Left cardiac atrium (tissue), 4 donors: ENCODE measurements at regions of chr12 and their contacts with region 1.

Region 1: DNA sequence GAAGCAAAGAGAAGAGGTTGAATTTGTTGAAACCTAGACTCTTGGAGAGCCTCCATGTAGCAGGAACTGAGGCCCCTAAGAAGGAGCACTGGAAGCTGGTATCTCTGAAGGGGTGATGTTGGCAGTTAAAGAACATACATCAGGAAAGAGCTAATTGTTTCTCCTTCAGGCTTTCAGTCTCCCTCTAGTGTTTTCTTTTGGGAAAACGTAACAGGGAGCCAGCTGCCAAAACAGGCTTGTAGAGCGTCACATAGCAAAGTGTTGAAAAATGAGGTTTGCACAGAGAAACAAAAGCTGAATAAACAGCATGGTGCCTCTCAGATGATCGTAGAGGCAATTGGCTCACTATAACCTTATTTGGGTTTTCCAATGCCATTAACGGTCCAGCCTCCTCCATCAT is 46.9 kb upstream of the CAND1 start:
- DNase-seq: no peak
- ATAC-seq: peak in 1 of 2 donors; percentile 38

Region 2: DNA sequence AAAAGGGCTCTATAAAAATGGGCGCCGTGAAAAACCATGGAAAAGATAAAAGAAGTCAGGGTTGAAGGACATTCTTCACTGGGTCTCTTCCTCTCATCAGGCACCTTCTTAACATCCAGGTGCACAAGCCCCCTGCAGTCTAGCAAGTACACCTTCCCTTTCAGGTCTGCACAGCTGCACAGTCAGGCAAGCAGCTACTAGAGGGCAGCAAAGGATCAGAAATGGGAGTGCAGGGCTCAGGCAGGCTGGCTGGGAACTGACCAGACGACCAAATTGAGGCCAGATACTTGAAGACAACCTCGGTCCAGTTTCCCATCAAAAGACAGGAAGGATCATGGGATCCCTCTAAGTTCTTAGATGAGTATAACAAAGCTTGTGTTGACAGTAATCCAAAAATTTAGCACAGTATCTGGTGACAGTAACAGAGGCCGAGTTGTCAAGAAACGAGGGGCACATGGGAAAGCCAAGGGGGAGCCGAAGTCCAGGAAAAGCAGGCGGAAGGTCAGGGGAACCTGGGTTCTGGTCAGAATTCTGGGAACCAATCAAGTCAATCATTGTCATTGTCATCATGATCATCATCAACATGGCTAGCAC is 533.4 kb before region 1 on chr12:
- intact Hi-C with region 1: loop called in 1 of 2 experiments (anchors 5 kb)
- DNase-seq: peak; percentile 20
- ATAC-seq: peak; percentile 78 to 86

Region 3: DNA sequence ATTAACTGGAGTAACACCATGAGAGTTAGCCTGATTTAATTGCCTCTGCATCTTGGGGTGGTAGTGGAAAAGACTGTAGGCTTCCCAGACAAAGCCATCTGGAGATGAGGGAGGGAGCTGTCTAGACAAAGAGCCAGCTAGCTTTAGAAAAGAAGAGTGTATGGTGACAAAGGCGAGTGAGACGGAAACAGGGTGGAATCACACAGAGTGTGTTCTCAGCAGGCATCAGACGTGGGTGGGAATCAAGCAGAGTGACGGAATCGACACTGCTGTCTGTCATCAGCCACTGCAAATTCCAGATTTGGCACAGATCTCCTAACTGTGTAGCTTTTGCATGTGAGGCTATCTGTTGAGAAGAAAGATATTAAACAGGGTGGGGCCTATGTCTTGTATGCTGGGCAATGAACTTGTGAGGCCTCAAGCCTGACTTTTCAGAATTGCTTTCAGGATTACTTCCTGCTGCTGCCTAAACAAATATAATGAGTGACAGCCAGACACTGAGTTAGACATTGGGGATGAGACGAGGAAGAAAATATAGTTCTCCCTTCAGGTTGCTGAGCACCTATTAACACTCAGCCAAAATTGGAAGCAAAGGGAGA is 306.9 kb before region 1 on chr12:
- intact Hi-C with region 1: loop called in 1 of 2 experiments (anchors 10 kb)
- DNase-seq: peak; percentile 19
- ATAC-seq: peak; percentile 79 to 94

Region 4: DNA sequence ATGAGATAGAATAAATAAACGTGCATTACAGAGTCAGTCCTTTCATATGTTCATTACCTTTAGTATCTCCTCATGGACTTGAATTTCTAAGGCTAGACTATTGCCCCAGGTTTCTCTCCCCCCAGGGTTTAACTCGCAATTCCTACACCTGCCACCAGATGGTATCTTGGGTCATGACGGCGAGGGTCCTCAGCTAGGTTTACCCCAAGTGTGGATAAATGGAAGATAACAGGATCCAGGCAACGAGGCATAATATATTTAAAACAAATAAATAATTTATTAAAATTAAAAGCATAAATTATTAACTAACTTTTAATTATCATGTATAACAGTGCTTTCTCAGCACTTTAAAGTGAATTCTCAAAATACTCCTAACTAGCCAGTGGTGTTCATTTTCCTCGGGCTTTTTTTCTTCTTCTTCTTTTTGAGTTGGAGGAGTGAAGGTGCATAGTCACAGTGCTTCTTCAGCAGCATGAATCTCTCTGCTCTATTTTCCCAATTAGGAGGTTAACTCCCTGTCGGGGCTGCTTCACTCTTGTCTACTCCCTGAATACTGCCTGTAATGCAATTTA is 196.7 kb before region 1 on chr12:
- intact Hi-C with region 1: loop called in 1 of 2 experiments (anchors 5 kb)
- DNase-seq: no peak
- ATAC-seq: peak in 1 of 2 donors; percentile 56

Region 5: DNA sequence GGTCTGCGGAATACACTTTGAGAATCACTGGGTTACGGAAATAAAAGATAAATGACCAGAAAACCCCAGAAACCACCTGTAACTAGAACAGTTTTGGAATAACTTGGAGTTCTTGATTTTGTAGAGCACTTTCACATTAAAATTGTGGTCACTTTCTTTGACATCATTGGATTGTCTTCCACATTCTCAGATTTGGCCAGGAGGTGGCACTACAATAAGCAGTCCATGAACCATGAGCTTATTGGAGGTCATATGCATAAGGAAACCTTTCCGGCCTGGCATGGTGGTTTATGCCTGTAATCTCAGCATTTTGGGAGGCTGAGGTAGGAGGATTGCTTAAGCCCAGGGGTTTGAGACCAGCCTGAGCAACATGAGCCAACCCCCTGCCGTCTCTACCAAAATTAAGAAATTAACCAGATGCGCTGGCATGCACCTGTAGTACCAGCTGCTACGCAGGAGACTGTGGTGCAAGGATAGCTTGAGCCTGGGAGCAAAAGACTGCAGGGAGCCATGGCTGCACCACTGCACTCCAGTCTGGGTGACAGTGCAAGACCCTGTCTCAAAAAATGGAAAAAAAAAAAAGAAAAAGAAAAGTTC is 60.9 kb before region 1 on chr12:
- intact Hi-C with region 1: loop called in 1 of 2 experiments (anchors 1 kb)
- DNase-seq: peak; percentile 23
- ATAC-seq: peak; percentile 36 to 41

Region 6: DNA sequence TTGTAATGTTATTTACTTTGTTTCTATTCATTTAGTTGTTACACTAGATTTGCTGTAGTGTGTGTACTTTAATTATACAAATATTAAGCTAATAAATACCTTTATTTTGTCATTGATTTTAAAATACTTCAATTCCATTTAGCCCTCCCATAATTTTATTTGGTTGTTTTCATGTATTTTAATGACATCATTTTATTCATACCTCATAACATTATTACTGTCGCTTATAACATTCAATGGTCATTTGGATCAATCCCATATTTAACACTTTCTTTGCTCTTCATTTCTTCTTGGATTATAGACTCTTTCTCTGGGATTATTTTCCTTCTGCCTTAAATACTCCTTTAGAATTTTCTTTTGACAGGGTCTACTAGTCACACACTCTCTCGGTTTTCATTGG is 39.8 kb before region 1 on chr12:
- intact Hi-C with region 1: no loop called
- DNase-seq: no peak
- ATAC-seq: no peak

Region 7: GRCh38 chr12:67410667-67411067 is 188.4 kb after region 1 on chr12:
- intact Hi-C with region 1: no loop called
- DNase-seq: no peak
- ATAC-seq: peak; percentile 19 to 77

Region 8: DNA sequence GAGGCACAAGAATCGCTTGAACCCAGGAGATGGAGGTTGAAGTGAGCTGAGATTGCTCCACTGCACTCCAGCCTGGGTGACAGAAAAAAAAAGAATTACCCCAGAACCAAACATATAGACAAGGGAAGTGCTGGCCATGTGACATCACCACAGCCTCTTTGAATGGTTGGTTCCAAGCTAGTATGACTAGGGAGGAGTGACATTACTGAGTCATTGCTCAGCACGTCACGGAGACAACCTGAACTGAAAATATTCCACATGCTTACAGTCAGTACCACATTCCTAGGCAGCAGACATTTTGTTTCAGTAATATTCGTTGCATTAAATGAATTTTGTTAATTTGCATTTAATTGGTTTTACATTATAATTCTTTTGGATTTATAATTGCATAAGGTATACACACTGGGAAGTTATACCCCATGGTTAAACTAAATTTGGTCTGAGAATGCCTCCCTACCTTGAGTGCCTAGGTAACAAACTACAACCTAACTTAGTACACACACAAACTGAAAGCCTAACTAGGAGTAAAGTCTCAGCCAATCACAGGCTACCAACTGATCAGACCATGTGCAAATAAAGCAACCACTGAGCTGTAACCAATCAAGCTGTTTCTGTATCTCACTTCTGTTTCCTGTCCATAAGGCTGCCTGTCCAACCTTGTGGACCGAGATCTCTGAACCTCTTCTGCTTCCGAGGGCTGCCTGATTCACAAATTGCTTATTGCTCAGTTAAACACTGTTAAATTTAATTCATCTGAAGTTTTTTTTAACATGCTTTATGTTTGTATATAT is 211.3 kb after region 1 on chr12:
- intact Hi-C with region 1: no loop called
- DNase-seq: no peak
- ATAC-seq: no peak